AG04450 (cell line): ENCODE measurements at regions of chr17 and their contacts with region 1.

Region 1: GRCh38 chr17:66533986-66534385 is 231.6 kb downstream of the PRKCA start:
- DNase-seq: no peak
- H3K4me3 ChIP-seq: no peak overlapping the region; the same call in 1 of the 2 replicates
- H3K27ac ChIP-seq: peak overlapping the region; percentile 61
- H3K27me3 ChIP-seq: no peaks in the 10 kb centered on the region
- CTCF ChIP-seq: no peak

Region 2: DNA sequence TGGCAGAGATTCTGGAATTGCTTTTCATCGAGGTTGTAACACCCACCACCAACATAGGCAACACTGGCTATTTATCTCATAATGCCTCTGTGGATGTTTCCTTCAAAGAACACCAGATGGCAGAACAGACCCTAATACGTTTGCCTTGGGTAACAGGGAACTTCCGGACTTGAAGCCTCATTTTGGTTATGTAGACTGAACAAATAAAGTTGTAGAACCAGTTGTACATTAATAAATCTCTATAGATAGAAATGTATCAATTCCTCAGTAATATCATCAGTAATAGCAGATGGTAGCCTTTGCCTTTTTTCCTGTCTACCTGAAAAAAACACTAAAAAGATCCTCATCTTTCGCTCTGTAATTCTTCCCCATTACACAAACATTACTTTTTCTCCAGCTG is 278.9 kb before region 1 on chr17:
- CTCF ChIA-PET with region 1: interaction called, 13 read pairs
- POLR2A ChIA-PET with region 1: no interaction called
- DNase-seq: peak; percentile 62
- H3K4me3 ChIP-seq: no peak overlapping the region
- H3K27ac ChIP-seq: no peak overlapping the region
- H3K27me3 ChIP-seq: no peaks in the 10 kb centered on the region
- CTCF ChIP-seq: peak; percentile 82

Region 3: DNA sequence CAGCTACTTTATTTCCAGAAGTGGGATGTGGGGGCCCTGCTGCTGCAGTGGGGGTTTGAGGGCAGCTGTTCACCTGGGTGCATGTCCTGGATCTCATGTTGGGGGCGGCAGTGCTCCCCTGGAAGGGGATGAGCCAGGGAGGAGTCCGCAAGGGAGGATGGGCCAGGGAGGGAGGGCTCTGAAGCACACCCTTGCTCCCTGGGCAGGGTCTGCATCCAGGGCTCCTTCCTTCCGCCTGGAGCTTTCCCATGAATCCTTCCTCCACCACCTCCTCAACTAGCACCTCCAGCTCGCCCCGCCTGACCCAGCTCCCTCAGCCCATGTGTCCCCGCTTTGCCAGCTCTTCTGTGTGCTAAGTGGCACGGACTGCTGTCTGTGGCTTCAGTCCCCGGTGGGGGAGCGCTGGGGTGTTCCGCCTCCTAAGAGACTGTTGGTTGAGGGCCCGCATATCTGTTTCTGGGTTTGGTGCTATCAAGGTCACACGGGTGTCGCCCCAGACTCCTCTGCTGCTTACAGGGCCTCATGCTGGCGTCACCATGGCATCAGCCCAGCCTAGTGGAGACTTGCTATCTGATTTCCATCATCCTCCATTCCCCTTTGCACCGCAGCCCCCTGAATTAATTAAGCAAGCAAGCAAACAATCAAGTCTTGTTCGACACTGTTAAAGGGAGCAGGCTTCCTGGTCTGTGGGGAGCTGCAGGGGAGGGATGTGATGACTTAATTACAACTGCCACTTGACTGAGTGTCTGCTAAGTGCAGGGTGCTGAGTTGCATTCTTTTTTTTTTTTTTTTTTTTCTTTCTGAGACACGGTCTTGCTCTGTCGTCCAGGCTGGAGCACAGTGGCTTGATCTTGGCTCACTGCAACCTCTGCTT is 159.8 kb before region 1 on chr17:
- CTCF ChIA-PET with region 1: no interaction called
- POLR2A ChIA-PET with region 1: interaction called, 10 read pairs
- DNase-seq: no peak
- H3K4me3 ChIP-seq: no peak overlapping the region
- H3K27ac ChIP-seq: no peak overlapping the region
- H3K27me3 ChIP-seq: no peaks in the 10 kb centered on the region
- CTCF ChIP-seq: no peak